Natural killer cell (primary cell): ENCODE measurements at regions of chr14 and their contacts with region 1.

Region 1: DNA sequence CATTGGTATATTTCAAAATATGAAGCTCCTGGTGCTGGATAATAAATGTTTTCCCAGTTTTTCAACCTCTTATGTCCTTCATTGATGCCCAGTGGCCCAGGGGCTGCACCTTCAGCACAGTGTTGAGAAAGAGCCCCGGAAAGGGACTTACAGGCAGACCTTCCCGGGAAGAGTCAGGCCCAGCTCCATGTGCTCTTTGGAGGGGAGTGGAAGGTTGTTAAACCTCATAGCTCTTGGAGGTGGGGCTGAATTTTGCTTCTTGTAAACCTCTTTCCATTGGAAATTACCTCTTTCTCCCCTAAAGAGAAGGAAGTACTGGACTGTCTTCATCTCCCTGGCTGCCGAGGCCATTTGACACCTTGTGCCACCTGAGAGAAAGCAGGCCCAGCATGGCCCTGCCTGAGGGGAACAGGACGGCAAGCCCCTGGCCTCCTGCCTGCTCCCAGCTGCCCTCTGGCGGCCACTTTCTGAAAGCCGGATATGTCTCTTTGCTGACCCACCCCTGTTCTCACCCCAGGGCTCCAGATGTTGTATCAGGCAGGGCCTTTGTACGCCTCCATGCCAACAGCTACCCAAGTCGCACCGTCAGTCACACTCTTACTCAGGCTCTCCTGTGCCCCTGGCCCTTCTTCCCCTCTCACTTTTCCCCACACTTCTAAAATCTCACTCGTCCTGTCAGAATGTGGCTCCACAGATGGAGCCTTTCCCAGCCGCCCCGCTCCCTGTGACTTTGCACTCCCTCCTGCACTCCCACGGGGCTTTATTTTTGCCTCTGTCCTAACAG is 43.0 kb downstream of the EVL start:
- DNase-seq: peak; percentile 87 to 93
- ATAC-seq: peak; percentile 75 to 85 (median 78)
- H3K4me3 ChIP-seq: no peak overlapping the region
- H3K4me3 Mint-ChIP-seq: peak overlapping the region; percentile 78
- H3K27ac ChIP-seq: peak overlapping the region; percentile 52
- H3K27ac Mint-ChIP-seq: peak overlapping the region; percentile 87 to 93
- H3K4me1 ChIP-seq: peaks cover 77% of the 10 kb centered on the region
- H3K4me1 Mint-ChIP-seq: peaks cover 82 to 92% of the 10 kb centered on the region in 2 donors
- H3K27me3 ChIP-seq: no peaks in the 10 kb centered on the region
- H3K27me3 Mint-ChIP-seq: no peaks in the 10 kb centered on the region
- CTCF ChIP-seq: peak; percentile 94

Region 2: DNA sequence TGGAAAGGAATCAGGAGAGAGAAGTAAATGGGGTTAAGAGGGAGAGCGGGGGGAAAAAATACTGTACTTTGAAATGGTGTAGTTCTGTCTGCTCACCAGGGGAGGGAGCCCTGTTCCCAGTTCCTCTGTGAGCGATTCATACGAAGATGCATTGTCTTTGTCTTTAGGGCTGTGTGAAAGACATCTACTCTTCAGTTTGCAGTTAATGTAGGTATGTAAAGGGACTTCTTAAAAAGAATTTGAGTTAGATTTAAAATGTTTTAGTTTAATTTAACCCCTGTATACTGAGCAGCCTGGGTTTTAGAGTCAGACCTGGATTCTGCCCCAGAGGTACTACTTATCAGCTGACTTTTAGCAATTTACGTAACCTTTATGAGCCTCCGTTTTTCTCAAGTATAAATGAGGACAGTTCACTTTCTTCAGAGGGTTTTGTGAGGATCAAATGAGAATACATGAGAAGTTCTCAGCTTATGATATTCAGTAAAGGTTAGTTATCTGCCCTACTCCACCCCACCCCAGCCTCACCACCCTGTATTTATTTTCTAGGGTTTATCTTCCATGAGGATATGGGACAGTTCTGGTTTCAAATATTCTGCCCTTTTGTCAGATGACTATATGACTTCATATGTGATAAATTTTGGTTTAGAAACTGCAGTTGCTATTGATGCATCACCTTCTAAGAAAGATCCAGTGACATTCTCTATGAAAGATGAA is 125.5 kb before region 1 on chr14:
- intact Hi-C with region 1: loop called (anchors 1 kb)
- DNase-seq: peak; percentile 59 to 89
- ATAC-seq: peak; percentile 95 to 100 (median 100)
- H3K4me3 ChIP-seq: no peak overlapping the region
- H3K4me3 Mint-ChIP-seq: no peak overlapping the region
- H3K27ac ChIP-seq: no peak overlapping the region
- H3K27ac Mint-ChIP-seq: no peak overlapping the region
- H3K4me1 ChIP-seq: no peaks in the 10 kb centered on the region
- H3K4me1 Mint-ChIP-seq: peaks cover 0 to 4% of the 10 kb centered on the region in 2 donors
- H3K27me3 ChIP-seq: no peaks in the 10 kb centered on the region
- H3K27me3 Mint-ChIP-seq: no peaks in the 10 kb centered on the region
- CTCF ChIP-seq: peak; percentile 97

Region 3: GRCh38 chr14:100056964-100057795 is 51.1 kb before region 1 on chr14:
- intact Hi-C with region 1: loop called (anchors 1 kb)
- DNase-seq: peak in 1 of 2 donors; percentile 83
- ATAC-seq: peak; percentile 75 to 91 (median 88)
- H3K4me3 ChIP-seq: no peak overlapping the region
- H3K4me3 Mint-ChIP-seq: no peak overlapping the region
- H3K27ac ChIP-seq: no peak overlapping the region
- H3K27ac Mint-ChIP-seq: peak overlapping the region; percentile 84 to 93
- H3K4me1 ChIP-seq: peaks cover 38% of the 10 kb centered on the region
- H3K4me1 Mint-ChIP-seq: peaks cover 54 to 60% of the 10 kb centered on the region in 2 donors
- H3K27me3 ChIP-seq: no peaks in the 10 kb centered on the region
- H3K27me3 Mint-ChIP-seq: no peaks in the 10 kb centered on the region
- CTCF ChIP-seq: peak; percentile 74

Region 4: DNA sequence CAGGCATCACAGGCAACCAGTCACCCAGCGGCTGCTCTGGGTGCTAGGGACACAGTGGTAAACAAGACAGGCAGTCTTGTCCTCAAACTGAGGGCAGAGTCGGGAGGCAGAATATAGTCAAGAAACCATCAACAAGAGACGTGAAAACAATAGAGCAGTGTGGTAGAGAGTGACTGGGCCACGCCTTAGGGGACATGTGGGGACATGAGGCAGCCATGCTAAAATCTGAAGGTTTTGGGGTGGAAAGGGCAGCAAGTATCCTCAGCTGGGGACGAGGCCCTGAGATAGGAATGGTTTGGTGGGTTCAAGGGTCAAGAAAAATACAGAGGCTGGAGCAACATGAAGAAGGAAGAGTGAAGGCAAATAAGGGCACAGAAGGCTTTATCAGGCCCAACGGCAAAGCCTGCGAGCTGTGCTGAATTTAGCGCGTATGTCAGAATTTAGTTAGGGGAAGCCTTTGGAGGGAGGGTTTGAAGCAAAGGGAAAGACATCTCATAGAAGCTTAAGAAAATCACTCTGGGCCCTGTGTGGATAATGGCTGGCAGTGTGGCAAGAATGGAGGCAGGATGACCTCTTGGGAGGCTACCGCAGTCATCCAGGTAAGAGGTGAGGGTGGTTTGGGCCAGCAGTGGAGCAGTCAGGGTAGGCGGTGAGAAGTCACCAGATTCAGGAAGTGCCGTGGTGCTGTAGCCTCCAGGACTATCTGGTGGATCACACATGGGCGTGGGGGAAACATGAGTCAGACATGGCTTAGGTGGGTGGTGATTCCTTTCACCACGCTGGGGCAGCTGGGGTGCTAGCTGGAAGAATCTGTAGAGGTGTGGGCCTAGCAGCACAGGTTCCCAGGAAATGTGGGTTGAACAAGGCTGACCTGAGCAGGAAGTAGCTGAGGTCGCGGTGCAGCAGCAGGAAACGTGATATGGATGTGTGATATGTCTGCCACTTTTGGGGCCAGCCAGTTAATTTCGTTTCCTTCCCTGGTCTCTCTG is 40.0 kb before region 1 on chr14:
- intact Hi-C with region 1: loop called (anchors 1 kb)
- DNase-seq: peak; percentile 85 to 96
- ATAC-seq: peak; percentile 53 to 76 (median 65)
- H3K4me3 ChIP-seq: peak overlapping the region; percentile 78
- H3K4me3 Mint-ChIP-seq: peak overlapping the region; percentile 90
- H3K27ac ChIP-seq: peak overlapping the region; percentile 89
- H3K27ac Mint-ChIP-seq: peak overlapping the region; percentile 93
- H3K4me1 ChIP-seq: peaks cover 76% of the 10 kb centered on the region
- H3K4me1 Mint-ChIP-seq: peaks cover 92 to 95% of the 10 kb centered on the region in 2 donors
- H3K27me3 ChIP-seq: no peaks in the 10 kb centered on the region
- H3K27me3 Mint-ChIP-seq: no peaks in the 10 kb centered on the region
- CTCF ChIP-seq: no peak

Region 5: DNA sequence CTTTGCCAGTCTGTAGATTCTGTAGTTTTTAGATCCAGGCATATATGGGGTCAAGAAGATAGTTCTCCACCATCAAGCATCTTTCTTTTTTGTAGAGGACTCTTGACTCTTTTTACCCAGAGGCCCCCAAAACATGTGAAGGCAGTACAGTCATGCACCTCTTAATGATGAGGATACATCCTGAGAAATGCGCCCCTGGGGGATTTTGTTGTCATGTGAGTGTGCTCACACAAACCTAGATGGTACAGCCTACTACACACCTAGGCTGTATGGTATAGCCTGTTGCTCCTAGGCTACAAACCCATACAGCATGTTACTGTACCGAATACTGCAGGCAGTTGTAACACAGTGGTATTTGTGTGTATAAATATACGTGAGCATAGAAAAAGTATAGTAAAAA is 20.0 kb before region 1 on chr14:
- intact Hi-C with region 1: loop called (anchors 2 kb)
- DNase-seq: no peak
- ATAC-seq: no peak
- H3K4me3 ChIP-seq: no peak overlapping the region
- H3K4me3 Mint-ChIP-seq: no peak overlapping the region
- H3K27ac ChIP-seq: no peak overlapping the region
- H3K27ac Mint-ChIP-seq: peak overlapping the region; percentile 93
- H3K4me1 ChIP-seq: peaks cover 49% of the 10 kb centered on the region
- H3K4me1 Mint-ChIP-seq: peaks cover 79 to 93% of the 10 kb centered on the region in 2 donors
- H3K27me3 ChIP-seq: no peaks in the 10 kb centered on the region
- H3K27me3 Mint-ChIP-seq: no peaks in the 10 kb centered on the region
- CTCF ChIP-seq: no peak

Region 6: GRCh38 chr14:100203949-100204834 is 96.0 kb after region 1 on chr14:
- intact Hi-C with region 1: no loop called
- DNase-seq: no peak
- ATAC-seq: no peak
- H3K4me3 ChIP-seq: no peak overlapping the region
- H3K4me3 Mint-ChIP-seq: no peak overlapping the region
- H3K27ac ChIP-seq: no peak overlapping the region
- H3K27ac Mint-ChIP-seq: no peak overlapping the region
- H3K4me1 ChIP-seq: no peaks in the 10 kb centered on the region
- H3K4me1 Mint-ChIP-seq: no peaks in the 10 kb centered on the region
- H3K27me3 ChIP-seq: no peaks in the 10 kb centered on the region
- H3K27me3 Mint-ChIP-seq: peaks cover 0 to 2% of the 10 kb centered on the region in 2 donors
- CTCF ChIP-seq: no peak